ENCODE measurements at regions of chr12 and their contacts with region 1.

Region 1: DNA sequence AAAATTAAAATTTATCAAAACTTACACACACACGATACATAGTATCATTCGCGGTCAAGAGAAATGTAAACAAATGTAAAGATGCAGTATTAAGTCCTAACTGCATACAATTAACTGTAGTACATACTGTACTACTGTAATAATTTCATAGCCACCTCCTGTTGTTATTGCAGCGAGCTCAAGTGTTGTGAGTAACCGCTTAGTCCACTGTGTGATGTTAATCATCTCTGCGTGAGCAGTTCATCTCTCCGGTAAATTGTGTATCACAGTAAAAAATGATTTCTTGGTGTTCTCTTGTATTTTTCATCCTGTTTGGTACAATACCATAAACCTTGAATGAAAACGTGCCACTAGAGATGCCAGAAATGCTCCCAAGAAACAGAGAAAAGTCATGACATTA is 6.5 kb downstream of the EPS8 start:
- DNase-seq: no peak
- H3K4me3 ChIP-seq: no peak overlapping the region
- H3K27ac ChIP-seq: no peak overlapping the region
- H3K4me1 ChIP-seq: peaks cover 0 to 6% of the 10 kb centered on the region in 2 donors
- H3K27me3 ChIP-seq: no peaks in the 10 kb centered on the region
- CTCF ChIP-seq: no peak
- POLR2A ChIP-seq: no peak

Region 2: GRCh38 chr12:15868186-15868585 is 85.5 kb after region 1 on chr12:
- intact Hi-C with region 1: loop called (anchors 5 kb)
- DNase-seq: no peak
- H3K4me3 ChIP-seq: no peak overlapping the region
- H3K27ac ChIP-seq: no peak overlapping the region
- H3K4me1 ChIP-seq: no peaks in the 10 kb centered on the region
- H3K27me3 ChIP-seq: no peaks in the 10 kb centered on the region
- CTCF ChIP-seq: no peak
- POLR2A ChIP-seq: no peak

Measured in breast epithelium (tissue), 4 donors.